Dendritic cell treated with granulocyte-macrophage colony-stimulating factor and Interleukin-4, amounts not matched to agents 40 ng/mL and 50 ng/mL, for 4 days (primary cell): ENCODE measurements at regions of chr1 and their contacts with region 1.

Region 1: GRCh38 chr1:9651565-9652378 is at the start of gene PIK3CD:
- H3K4me3 Mint-ChIP-seq: peak within 1 kb of the TSS; percentile 92
- H3K27ac Mint-ChIP-seq: peak within 1 kb of the TSS; percentile 92
- H3K4me1 Mint-ChIP-seq: peaks cover 66% of the 10 kb centered on the region
- H3K27me3 Mint-ChIP-seq: no peaks in the 10 kb centered on the region

Region 2: DNA sequence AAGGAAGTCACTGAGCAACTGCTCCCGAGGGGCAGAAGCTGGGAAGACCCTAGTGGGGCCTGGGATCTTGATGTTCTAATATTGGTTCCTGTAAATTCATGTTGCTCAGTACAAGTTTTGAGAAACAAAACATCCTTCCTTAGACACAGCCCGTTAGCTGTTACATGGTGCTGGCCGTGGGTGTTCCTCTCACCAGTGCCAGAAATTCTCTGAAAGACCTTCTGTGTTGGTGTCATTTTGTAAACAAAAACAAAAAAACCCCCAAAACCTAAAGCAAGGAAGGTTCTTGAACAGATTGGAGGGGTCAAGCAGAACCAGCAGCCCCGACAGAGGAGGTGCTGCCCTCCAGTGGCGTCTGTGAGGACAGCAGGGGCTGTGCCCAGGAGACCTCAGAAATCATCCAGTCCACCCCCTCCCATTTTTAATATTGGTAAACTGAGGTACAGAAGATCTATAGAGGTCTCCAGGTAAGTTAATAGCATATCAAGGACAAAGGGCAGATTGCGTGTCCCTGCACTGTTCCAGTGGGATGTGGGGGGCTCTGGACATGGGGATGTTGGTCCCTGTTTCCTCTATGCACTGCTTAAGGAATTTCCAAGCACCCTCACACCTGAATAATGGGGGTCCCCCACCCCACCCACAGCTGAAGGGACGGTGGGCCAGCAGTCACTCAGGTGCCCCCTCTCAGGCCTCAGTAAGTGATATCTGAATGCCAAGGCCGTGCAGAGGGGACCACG is 663.7 kb before region 1 on chr1:
- intact Hi-C with region 1: no loop called
- H3K4me3 Mint-ChIP-seq: no peak overlapping the region
- H3K27ac Mint-ChIP-seq: no peak overlapping the region
- H3K4me1 Mint-ChIP-seq: no peaks in the 10 kb centered on the region
- H3K27me3 Mint-ChIP-seq: peaks cover 7% of the 10 kb centered on the region

Region 3: GRCh38 chr1:9593492-9594465 is 58.0 kb before region 1 on chr1:
- intact Hi-C with region 1: no loop called
- H3K4me3 Mint-ChIP-seq: peak overlapping the region; percentile 46
- H3K27ac Mint-ChIP-seq: peak overlapping the region; percentile 31
- H3K4me1 Mint-ChIP-seq: peaks cover 53% of the 10 kb centered on the region
- H3K27me3 Mint-ChIP-seq: peaks cover 4% of the 10 kb centered on the region

Region 4: DNA sequence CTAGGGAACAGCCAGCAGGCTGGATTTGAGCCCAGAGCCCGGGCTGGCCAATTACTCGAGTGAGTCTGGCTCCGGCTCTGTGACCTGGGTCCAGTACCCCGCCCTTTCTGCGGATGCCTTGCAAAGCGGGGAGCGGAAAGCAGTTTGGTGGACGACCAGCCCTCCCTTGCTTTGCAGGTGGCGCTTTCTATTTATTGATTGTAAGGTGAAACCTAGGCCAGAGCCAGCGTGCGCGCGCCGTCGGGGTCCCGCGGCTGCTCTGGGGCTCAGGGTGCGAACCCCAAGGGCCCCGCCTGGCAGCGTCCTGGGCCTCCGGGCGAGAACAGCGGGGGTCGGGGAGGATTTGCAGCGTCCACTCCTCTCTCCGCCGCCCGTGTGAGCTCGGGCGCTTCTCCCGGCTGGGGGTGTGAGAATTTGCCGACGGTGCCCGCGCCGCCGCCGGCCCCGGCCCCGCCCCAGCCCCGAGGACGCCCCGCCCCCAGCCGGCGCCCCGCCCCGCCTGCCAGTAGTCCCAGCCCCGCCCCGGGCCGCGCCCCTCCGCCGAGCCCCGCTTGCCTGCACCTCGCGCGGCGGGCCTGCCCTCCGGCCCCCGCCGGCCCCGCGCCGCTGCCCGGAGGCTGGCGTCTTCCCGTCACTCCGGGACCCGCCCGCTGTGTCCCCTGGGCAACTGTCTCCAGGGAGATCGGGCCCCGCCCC is 37.4 kb after region 1 on chr1:
- intact Hi-C with region 1: loop called (anchors 5 kb)
- H3K4me3 Mint-ChIP-seq: peak overlapping the region; percentile 83
- H3K27ac Mint-ChIP-seq: no peak overlapping the region
- H3K4me1 Mint-ChIP-seq: peaks cover 78% of the 10 kb centered on the region
- H3K27me3 Mint-ChIP-seq: no peaks in the 10 kb centered on the region

Region 5: DNA sequence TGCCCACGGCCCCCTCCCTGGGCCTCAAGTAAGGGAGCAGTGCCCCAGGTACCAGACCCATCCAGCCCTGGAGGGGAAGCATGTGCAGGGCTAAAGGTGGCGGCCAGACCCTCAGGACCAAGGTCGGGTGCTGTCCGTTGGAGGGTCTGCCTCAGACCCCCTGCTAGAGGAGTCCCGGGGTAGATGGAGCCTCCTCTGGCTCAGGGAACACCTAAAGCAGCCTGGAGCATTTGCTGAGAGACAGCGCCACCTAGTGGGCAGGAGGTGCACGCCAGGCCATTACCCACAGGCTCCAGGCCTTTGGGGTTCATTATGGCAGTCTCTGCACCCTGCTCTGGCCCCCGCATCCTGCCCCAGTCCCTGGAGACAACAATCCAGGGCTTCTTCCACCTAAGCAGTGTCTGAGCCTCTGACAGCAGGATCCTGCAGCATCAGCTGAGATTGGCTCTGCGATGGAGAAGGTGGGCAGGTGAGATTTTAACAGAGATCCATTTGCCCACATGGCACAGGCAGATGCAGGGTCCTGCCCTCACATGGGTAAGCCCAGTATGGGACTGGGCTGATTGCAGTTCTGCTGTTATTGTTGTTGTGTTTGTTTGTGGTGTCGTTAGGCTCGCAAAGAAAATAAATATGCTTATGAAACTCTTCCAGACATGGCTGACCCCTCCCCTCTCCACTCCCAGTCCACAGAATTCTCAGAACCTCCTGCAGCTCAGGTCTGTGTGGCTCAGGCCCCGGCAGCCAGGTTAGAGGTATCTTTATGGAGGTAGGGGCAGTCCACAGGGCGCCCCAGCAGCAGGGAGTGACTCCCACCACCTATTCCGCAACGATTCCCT is 215.9 kb after region 1 on chr1:
- intact Hi-C with region 1: no loop called
- H3K4me3 Mint-ChIP-seq: no peak overlapping the region
- H3K27ac Mint-ChIP-seq: no peak overlapping the region
- H3K4me1 Mint-ChIP-seq: peaks cover 17% of the 10 kb centered on the region
- H3K27me3 Mint-ChIP-seq: no peaks in the 10 kb centered on the region